ENCODE measurements at regions of chr16 and their contacts with region 1.

Region 1: GRCh38 chr16:29815793-29816693 is at the start of gene PAGR1:
- DNase-seq: peak; percentile 96 to 100
- H3K4me3 ChIP-seq: peak within 1 kb of the TSS; percentile 62 to 70
- H3K27ac ChIP-seq: peak within 1 kb of the TSS; percentile 88 to 94
- H3K4me1 ChIP-seq: peaks cover 0 to 39% of the 10 kb centered on the region in 2 donors
- H3K27me3 ChIP-seq: no peaks in the 10 kb centered on the region
- CTCF ChIP-seq: peak; percentile 82 to 91 (median 90)
- total RNA-seq, gene PAGR1: 54.3 TPM

Region 2: GRCh38 chr16:29708917-29709600 is 107.0 kb before region 1 on chr16:
- intact Hi-C with region 1: loop called (anchors 1 kb)
- DNase-seq: no peak
- H3K4me3 ChIP-seq: no peak overlapping the region
- H3K27ac ChIP-seq: no peak overlapping the region
- H3K4me1 ChIP-seq: no peaks in the 10 kb centered on the region
- H3K27me3 ChIP-seq: no peaks in the 10 kb centered on the region
- CTCF ChIP-seq: no peak

Region 3: GRCh38 chr16:29790183-29790952 is 25.7 kb before region 1 on chr16 and contains the start of gene KIF22:
- intact Hi-C with region 1: loop called (anchors 2 kb)
- DNase-seq: peak; percentile 94 to 100
- H3K4me3 ChIP-seq: peak within 1 kb of the TSS; percentile 58 to 89
- H3K27ac ChIP-seq: peak within 1 kb of the TSS; percentile 76 to 87
- H3K4me1 ChIP-seq: peaks cover 0 to 17% of the 10 kb centered on the region in 2 donors
- H3K27me3 ChIP-seq: no peaks in the 10 kb centered on the region
- CTCF ChIP-seq: peak; percentile 66 to 84 (median 75)
- total RNA-seq, gene KIF22: 28.6 TPM

Region 4: DNA sequence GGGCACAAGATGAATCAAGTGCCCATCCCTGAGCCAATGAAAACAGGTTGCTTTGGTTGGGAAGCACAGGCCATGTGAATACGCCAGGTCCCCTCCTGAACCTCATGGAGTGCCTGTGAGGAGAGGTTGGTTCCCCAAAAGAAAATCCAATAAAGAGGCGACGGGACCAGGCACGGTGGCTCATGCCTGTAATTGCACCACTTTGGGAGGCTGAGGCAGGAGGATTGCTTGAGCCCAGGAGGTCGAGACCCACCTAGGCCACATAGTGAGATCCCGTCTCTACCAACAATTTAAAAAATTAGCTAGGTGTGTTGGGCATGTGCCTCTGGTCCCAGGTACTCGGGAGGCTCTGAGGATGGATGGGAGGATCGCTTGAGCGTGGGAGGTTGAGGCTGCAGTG is 363.9 kb after region 1 on chr16:
- intact Hi-C with region 1: no loop called
- DNase-seq: no peak
- H3K4me3 ChIP-seq: no peak overlapping the region
- H3K27ac ChIP-seq: no peak overlapping the region
- H3K4me1 ChIP-seq: peaks cover 3 to 9% of the 10 kb centered on the region in 2 donors
- H3K27me3 ChIP-seq: no peaks in the 10 kb centered on the region
- CTCF ChIP-seq: no peak